ENCODE measurements at regions of chr7 and their contacts with region 1.

Region 1: DNA sequence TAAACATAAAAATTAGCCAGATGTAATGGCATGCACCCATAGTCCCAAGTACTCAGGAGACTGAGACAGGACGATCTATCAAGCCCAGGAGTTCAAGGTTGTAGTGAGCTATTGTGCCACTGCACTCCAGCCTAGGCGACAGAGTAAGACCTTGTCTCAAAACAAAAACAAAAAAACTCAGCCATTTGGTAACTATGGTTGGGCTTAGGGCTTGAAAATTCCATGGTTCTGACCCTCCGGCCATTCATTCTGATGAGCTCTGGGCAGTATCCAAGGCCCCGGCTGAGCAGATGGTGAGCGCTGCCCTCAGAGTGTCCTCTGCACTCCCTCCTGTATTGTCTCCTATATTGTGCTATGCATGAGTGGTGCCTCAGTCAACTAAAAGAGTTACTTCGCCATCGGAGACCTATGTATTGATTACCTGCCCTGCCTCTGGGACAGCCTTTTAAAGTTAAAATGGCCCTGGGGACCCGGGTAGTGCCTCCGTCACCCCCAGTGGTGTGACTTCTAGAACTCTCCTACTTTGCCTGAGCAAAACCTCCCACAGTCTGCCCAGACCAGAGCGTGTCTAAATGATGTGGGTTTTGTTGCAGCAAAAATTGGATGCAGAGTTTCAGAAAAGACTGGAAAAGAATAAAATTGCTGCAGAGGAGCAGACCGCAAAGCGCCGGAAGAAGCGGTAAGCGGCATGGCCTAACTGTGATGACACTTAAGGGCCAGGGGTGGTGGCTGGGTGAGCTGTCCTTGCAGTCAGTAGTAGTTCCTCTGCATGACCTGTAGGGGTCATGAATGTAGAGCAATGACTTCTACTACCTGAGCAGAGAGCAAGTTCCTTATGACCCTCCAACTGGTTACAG is 8.1 kb downstream of the PRKRIP1 start:
- DNase-seq: peak; percentile 61
- H3K4me3 Mint-ChIP-seq: no peak overlapping the region
- H3K27ac Mint-ChIP-seq: no peak overlapping the region
- H3K4me1 Mint-ChIP-seq: peaks cover 6% of the 10 kb centered on the region
- H3K27me3 Mint-ChIP-seq: no peaks in the 10 kb centered on the region

Region 2: DNA sequence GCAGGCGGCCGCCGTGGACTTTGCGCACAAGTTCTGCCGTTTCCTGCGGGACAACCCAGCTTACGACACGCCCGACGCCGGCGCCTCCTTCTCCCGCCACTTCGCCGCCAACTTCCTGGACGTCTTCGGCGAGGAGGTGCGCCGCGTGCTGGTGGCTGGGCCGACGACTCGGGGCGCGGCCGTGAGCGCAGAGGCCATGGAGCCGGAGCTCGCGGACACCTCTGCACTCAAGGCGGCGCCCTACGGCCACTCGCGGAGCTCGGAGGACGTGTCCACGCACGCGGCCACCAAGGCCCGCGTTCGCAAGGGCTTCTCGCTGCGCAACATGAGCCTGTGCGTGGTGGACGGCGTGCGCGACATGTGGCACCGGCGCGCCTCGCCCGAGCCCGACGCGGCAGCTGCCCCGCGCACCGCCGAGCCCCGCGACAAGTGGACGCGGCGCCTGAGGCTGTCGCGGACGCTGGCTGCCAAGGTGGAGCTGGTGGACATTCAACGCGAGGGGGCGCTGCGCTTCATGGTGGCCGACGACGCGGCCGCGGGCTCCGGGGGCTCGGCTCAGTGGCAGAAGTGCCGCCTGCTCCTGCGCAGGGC is 103.5 kb before region 1 on chr7:
- CTCF ChIA-PET with region 1: no interaction called
- POLR2A ChIA-PET with region 1: no interaction called
- intact Hi-C with region 1: no loop called
- DNase-seq: no peak
- H3K4me3 Mint-ChIP-seq: no peak overlapping the region
- H3K27ac Mint-ChIP-seq: no peak overlapping the region
- H3K4me1 Mint-ChIP-seq: peaks cover 4% of the 10 kb centered on the region
- H3K27me3 Mint-ChIP-seq: no peaks in the 10 kb centered on the region

Region 3: DNA sequence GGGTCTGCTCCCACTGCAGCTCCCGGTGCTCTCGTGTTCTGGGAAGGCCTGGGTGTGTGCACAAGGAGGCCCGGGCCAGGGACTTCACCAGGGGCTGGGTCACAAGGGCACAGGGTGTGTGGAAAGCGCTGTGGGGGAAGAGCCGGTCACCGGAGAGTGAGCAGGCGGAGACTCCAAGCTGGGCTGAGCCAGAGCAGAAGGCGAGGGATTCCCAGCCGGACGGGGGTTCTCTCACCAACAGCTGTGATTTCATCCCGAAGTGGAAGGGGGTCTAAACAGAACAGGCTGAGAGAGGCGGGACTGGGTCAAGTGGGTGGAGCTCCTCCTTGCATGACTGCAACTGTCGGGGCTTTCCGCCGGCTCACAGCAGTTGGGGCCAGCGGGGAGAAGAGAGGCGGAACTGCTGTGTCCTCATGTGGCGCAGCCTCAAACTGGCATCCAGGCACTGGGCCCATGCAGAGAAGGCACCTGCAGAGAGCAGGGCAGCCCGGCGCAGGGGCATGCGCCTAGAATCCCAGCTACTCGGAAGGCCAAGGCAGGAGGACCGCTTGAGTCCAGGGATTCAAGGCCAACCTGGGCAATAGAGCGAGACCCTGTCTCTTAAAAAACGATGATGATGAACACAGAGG is 21.5 kb after region 1 on chr7:
- CTCF ChIA-PET with region 1: interaction called, 17 read pairs
- POLR2A ChIA-PET with region 1: no interaction called
- intact Hi-C with region 1: no loop called
- DNase-seq: peak; percentile 92
- H3K4me3 Mint-ChIP-seq: peak overlapping the region; percentile 76
- H3K27ac Mint-ChIP-seq: peak overlapping the region; percentile 100
- H3K4me1 Mint-ChIP-seq: peaks cover 62% of the 10 kb centered on the region
- H3K27me3 Mint-ChIP-seq: no peaks in the 10 kb centered on the region

Region 4: DNA sequence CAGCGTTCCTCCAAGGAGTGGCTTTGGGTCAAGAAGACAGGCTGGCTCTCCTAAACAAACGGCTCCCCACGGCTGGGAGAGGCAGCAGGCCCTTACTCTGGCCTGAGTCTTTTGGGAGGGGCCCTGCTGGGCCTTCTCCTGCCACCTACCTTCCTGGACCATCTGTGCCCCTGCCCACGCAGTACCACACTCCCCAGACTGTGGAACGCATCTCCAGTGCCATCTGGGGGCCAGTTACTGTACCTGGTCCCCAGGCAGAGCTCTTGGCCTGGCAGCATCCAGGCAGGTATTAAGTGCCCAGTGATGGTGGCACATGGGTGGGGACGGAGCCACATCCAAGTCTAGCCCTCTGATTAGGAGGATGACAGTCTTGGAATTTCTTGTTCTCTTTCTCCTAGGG is 46.0 kb after region 1 on chr7:
- CTCF ChIA-PET with region 1: interaction called, 26 read pairs
- POLR2A ChIA-PET with region 1: no interaction called
- intact Hi-C with region 1: loop called (anchors 2 kb)
- DNase-seq: peak; percentile 73
- H3K4me3 Mint-ChIP-seq: no peak overlapping the region
- H3K27ac Mint-ChIP-seq: no peak overlapping the region
- H3K4me1 Mint-ChIP-seq: peaks cover 4% of the 10 kb centered on the region
- H3K27me3 Mint-ChIP-seq: no peaks in the 10 kb centered on the region

Region 5: DNA sequence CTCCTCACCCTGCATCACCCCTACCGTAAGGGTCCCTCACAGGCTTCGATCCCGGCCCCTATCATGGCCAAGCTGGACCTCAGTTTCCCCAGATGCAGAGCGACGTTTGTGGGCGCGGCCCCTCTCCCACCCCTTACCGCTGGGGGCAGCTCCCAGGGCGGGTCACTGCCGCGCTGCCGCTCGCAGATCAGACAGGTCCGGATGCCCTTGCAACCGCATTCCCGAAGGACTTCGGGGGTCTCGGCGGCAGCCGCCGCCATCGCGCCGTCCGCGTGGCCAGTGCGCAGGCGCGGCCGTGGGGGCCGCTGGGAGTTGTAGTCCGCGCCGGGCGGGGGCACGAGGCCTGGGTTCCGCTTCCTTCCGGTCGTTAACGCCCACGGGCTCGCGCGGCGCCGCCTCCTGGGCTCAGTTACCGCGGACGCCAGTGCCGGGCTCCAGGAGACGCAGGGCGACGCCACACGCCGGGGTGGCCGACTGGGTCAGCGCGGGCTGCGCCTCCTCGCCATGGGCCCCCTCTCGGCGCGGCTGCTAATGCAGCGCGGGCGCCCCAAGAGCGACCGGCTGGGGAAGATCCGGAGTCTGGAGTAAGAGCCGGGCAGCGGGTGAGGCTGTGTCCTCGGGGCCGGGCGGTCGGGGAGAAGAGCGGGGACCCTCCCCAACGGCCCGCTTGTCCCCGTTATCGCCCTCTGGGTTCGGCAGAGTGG is 60.5 kb after region 1 on chr7 and contains the starts of genes ALKBH4 and LRWD1:
- CTCF ChIA-PET with region 1: interaction called, 25 read pairs
- POLR2A ChIA-PET with region 1: interaction called, 3 read pairs
- intact Hi-C with region 1: loop called (anchors 5 kb)
- DNase-seq: peak; percentile 97
- H3K4me3 Mint-ChIP-seq: peak within 1 kb of the TSS; percentile 93
- H3K27ac Mint-ChIP-seq: peak within 1 kb of the TSS; percentile 75
- H3K4me1 Mint-ChIP-seq: peaks cover 28% of the 10 kb centered on the region
- H3K27me3 Mint-ChIP-seq: no peaks in the 10 kb centered on the region
- total RNA-seq, gene ALKBH4: 7.7 to 7.8 TPM
- total RNA-seq, gene LRWD1: 16.4 to 20.0 TPM

Measured in activated CD4-positive, alpha-beta memory T cell treated with anti-CD3 and anti-CD28 coated beads for 36 hours (primary cell).